ENCODE measurements at regions of chr1 and their contacts with region 1.

Region 1: DNA sequence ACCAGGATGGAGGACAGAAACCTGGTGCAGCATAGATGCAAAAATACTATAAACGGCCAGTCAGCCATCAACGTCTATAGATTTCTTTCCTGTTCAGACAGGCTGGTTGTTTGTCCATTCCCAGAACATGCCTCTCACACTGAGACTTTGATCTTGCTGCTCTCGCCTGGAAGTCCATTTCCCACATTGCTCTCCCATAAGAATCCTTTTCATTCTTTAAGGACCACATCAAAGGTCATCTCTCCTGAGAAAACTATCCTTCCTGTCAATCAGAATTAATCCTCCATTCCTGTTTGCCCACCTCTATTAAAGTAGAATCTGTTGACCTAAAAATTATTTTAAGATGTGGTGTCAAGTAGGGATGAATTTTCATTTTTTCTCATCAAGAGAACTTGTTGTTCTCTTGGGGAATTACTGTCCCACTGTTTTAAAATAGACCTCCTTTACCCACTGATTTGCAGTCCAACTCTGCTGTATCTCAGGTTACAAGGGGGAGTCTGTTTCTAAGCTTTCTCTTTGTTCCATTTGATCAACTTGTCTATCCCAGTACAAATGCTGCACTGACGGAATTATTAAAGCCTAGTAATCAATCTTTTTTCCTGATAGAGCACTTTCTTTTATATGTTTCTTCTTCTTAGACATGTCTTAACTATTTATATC is 172.7 kb downstream of the PATJ start:
- DNase-seq: no peak
- ATAC-seq: peak in 3 of 4 donors; percentile 34 to 74 (median 48)
- H3K4me3 ChIP-seq: no peak overlapping the region
- H3K27ac ChIP-seq: peak overlapping the region; percentile 56
- H3K4me1 ChIP-seq: peaks cover 18% of the 10 kb centered on the region
- H3K27me3 ChIP-seq: no peaks in the 10 kb centered on the region
- CTCF ChIP-seq: no peak

Region 2: DNA sequence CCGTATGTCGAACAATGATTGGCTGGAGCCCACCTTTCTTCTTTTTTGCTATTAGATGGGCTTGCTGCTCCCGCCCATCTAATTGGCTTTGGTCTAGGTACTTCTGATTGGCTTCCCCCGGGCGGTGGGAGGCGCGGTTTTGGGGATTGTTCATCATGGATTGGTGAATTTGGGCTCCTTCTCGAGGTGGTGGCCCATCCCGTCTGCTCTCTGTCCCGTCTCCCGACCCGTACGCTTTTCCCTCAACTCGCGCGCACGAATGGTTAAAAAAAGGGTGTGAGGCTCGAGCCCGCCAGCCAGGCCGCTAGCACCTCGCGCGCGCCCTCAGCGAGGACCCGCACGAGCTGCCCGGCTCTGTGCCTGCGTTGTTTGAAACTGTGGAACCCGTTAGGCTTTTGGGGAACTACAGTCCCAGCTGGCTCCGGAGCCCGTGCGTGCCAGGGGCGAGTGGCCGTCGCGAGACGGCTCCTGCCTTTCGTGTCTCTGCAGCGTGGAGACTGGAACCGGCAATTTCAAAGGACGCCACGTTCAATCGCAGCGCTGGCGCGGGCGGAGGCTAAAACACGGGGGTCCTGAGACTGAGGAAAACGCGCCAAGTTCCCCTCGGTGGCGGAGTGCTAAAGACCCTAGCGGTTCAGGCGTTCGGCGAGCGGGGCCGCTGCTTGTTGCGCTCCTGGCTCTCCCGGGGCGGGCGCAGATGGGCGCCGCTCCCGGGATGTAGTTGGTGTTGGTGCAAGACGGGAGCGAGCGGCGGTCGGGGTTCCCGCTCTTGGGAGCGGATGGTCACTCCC is 521.7 kb after region 1 on chr1 and contains the start of gene USP1:
- intact Hi-C with region 1: loop called in 1 of 2 experiments (anchors 10 kb)
- DNase-seq: peak; percentile 98
- ATAC-seq: peak; percentile 85 to 93 (median 88)
- H3K4me3 ChIP-seq: peak within 1 kb of the TSS; percentile 84
- H3K27ac ChIP-seq: peak within 1 kb of the TSS; percentile 98
- H3K4me1 ChIP-seq: peaks cover 33% of the 10 kb centered on the region
- H3K27me3 ChIP-seq: no peaks in the 10 kb centered on the region
- CTCF ChIP-seq: no peak
- total RNA-seq, gene USP1: 12.1 to 19.3 (median 15.1) TPM

Measured in psoas muscle (tissue), 8 donors.